Activated naive CD4-positive, alpha-beta T cell treated with anti-CD3 and anti-CD28 coated beads, Interleukin-2, amount 10 ng/mL, durations not matched to agents 7 days and 5 days (primary cell): ENCODE measurements at regions of chr1 and their contacts with region 1.

Region 1: GRCh38 chr1:203172128-203173010 is 3.3 kb downstream of the MYBPH start:
- DNase-seq: peak; percentile 69
- H3K4me3 Mint-ChIP-seq: no peak overlapping the region
- H3K27ac Mint-ChIP-seq: no peak overlapping the region
- H3K4me1 Mint-ChIP-seq: no peaks in the 10 kb centered on the region
- H3K27me3 Mint-ChIP-seq: no peaks in the 10 kb centered on the region

Region 2: DNA sequence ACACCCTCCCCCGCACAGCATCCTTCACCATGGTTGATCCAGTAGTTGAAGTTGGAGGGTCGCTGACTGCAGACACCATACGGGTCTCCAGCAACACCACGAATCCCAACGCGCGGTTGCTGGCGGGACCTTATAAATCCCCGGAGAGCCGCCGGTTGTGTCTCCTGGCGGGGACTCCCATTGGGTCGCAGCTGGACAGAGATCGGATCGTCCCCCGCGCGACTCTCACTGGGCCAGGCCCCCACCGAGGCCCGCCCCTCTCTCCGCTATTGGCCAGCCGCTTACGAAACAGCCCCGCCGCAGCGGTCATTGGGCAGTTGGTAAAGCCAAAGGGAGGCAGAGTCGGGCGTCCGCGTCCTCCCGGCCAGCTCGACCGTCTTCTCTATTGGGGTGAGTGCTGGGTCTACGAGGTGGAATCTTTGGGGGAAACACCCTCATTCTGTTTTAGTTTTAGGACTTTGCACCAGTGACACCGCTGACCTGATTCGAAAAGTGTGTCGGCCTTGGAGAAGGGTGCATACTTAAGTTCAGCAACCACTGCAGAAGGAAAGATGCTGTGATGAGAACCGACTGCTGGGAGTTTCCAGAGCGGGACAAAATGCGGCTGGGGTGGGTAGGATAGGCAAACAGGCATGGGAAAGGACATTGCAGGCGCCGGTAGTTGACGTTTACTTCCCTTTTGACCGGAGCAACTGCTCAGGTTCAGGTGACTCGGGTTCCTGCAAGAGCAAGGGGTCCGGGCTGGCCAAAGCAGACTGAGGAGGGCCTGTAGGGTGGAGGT is 310.8 kb before region 1 on chr1:
- CTCF ChIA-PET with region 1: no interaction called
- DNase-seq: peak; percentile 53
- H3K4me3 Mint-ChIP-seq: peak overlapping the region; percentile 71
- H3K27ac Mint-ChIP-seq: no peak overlapping the region
- H3K4me1 Mint-ChIP-seq: peaks cover 14% of the 10 kb centered on the region
- H3K27me3 Mint-ChIP-seq: peaks cover 85% of the 10 kb centered on the region

Region 3: DNA sequence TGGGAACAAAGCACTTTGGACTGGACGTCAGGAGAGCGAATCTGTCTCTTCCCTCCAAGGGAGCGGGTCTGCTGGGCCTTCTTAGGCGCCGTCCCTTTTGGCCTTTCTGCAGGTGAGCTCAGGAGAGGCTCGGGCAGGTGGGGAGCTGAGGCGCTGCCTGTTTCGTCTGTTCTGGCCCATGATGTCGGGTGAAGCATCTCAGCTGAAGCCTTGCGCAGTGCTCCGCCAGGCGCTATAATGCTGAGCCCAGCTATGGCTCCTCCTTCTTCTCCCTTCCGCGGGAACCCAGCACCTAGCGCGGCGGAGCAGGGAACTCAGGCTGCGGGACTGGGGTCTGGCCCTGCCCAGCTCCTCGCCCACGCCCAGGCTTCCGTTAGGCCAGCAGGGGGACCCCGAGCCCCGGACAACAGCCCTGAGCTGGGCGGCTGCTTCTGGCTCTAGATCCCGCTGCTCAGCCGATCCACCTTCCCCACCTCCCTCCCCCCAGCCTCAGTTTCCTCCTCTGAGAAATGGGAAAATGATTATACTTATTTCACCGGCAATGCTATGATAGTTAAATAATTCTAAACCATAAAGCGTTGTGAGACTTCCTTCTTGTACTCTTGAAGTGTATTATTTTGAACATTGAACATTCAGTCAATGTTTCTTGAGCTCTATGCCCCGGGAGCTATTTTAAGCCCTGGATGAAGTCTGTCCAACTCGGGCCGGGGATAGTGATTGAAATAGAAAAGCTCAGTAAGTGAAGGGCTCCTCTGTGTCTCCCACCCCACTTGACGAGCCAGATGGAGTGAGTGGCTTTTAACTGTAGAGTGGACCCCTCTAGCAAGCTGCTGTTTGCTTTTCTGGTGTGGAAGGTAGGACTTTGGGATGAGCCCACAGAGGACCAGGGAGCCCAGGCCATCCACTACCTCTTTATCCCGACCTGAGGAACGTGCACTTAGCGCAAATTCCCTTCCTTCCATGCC is 54.5 kb before region 1 on chr1:
- CTCF ChIA-PET with region 1: interaction called, 66 read pairs
- DNase-seq: peak; percentile 60
- H3K4me3 Mint-ChIP-seq: no peak overlapping the region
- H3K27ac Mint-ChIP-seq: no peak overlapping the region
- H3K4me1 Mint-ChIP-seq: peaks cover 4% of the 10 kb centered on the region
- H3K27me3 Mint-ChIP-seq: peaks cover 68% of the 10 kb centered on the region

Region 4: DNA sequence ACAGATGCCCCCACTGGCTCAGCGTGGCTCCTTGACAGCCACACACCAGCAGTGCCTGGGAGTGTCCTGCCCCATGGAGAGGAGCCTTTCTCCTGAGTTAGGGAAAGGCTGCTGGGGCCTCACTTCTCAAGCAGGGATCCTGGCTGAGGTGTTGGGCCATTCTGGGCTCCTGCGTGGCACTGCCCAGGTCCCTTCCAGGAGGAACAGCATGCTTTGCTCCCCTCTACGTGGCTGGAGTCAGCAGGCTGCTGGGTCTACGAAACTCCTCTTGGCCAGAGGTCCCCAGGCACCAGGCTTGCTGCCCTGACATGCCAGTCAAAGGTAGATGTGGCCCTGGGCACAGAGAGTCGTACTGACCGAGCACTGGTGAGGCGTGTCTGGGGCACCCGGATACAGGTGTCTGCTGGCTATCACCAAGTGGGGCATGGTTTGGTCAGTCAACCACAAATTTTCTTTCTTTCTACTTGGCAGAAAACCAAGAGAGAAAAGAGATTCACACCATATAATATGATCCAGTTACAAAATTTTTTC is 40.7 kb before region 1 on chr1:
- CTCF ChIA-PET with region 1: interaction called, 12 read pairs
- DNase-seq: peak; percentile 9
- H3K4me3 Mint-ChIP-seq: no peak overlapping the region
- H3K27ac Mint-ChIP-seq: no peak overlapping the region
- H3K4me1 Mint-ChIP-seq: peaks cover 12% of the 10 kb centered on the region
- H3K27me3 Mint-ChIP-seq: peaks cover 73% of the 10 kb centered on the region

Region 5: DNA sequence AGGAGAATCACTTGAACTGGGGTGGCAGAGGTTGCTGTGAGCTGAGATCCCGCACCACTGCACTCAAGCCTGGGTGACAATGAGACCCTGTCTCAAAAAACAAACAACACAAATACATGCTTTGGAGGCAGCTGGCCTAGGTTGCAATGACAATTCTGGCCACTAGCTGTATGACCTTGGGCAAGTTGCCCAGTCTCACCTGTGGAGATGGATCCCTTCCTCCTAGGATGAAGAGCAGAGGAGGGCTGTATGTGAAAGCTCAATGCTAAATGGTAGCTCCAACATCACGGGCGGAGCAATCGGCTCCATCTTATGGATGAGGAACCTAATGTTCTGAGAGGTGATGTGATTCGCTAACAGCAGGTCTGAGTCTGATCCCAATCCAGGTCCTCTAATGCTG is 24.2 kb before region 1 on chr1:
- CTCF ChIA-PET with region 1: interaction called, 10 read pairs
- DNase-seq: no peak
- H3K4me3 Mint-ChIP-seq: no peak overlapping the region
- H3K27ac Mint-ChIP-seq: no peak overlapping the region
- H3K4me1 Mint-ChIP-seq: no peaks in the 10 kb centered on the region
- H3K27me3 Mint-ChIP-seq: peaks cover 16% of the 10 kb centered on the region

Region 6: DNA sequence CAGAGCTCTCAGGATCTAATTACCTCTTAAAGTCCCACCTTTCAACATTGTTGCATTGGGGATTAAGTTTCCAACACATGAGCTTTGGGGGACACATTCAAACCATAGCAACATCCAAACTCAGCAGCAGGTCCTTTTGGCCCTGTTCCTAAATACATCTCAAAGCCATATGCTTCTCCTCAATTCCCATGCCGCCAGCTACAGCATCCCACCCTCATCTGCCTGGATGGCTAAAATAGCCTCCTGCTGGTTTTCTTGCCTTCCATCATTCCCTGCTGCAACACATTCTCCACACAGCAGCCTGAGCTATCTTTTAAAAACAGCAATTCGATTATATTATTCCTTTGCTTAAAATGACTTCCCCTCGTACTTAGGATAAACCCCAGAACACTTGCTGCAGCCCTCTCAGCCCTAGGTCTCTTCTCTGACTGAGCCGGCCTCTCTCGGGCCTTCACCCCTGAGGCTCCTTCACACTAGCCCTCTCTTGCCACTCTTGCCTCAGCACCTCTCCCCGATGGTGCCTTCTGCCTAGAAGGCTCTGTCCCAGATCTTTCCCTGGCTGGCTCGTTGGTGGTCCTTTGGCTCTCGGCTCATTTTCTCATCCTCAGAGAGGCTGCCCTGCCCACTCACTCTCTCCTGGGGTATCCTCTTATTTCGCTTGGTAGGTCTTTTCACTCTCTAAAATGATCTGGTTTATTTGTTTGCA is 13.3 kb before region 1 on chr1:
- CTCF ChIA-PET with region 1: interaction called, 33 read pairs
- DNase-seq: no peak
- H3K4me3 Mint-ChIP-seq: no peak overlapping the region
- H3K27ac Mint-ChIP-seq: no peak overlapping the region
- H3K4me1 Mint-ChIP-seq: no peaks in the 10 kb centered on the region
- H3K27me3 Mint-ChIP-seq: peaks cover 48% of the 10 kb centered on the region